ENCODE measurements at regions of chr15 and their contacts with region 1.

Region 1: GRCh38 chr15:34795267-34796081 is at the start of gene ACTC1:
- DNase-seq: peak; percentile 32 to 87
- H3K4me3 ChIP-seq: peak within 1 kb of the TSS; percentile 42 to 48
- H3K27ac ChIP-seq: peak within 1 kb of the TSS; percentile 73 to 77
- H3K4me1 ChIP-seq: peaks cover 0 to 74% (median 36%) of the 10 kb centered on the region in 4 donors
- H3K27me3 ChIP-seq: no peaks in the 10 kb centered on the region
- CTCF ChIP-seq: no peak

Region 2: GRCh38 chr15:34358367-34358766 is 437.1 kb before region 1 on chr15:
- intact Hi-C with region 1: no loop called
- DNase-seq: no peak
- H3K4me3 ChIP-seq: no peak overlapping the region
- H3K27ac ChIP-seq: no peak overlapping the region
- H3K4me1 ChIP-seq: no peaks in the 10 kb centered on the region
- H3K27me3 ChIP-seq: no peaks in the 10 kb centered on the region
- CTCF ChIP-seq: no peak

Region 3: DNA sequence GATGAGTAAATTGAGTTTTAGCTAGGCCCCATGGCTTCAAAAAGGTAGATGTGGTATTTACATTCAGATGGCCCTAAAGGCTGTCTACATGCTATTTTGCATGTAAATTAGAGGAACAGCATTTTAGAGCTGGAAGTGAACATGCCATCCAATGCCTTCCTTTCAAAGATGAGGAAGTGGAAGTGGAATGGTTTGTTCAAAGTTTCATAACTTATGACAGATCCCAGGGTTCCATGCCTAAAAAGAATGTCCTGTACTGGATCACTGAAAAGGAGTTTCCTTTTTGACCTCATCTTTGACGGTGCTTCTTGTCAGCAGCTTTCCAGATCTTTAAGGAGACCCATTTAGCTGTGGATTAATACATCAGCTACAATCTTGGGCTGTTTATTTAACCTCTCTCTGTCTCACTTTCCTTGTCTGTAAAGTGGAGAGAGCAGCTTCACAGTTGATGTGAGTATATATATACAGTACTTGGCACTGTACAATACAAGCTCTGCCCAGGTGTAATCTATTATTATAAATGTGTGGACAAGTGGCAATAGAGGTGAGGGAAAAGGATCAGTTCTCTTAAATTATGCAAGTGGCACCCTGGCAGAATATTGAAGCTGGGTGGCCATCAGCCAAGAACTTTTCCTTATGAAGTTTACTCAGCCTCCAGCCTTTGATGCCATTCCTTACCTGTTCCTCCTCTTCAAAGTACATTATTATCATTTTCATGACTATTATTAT is 143.3 kb before region 1 on chr15:
- intact Hi-C with region 1: no loop called
- DNase-seq: no peak
- H3K4me3 ChIP-seq: no peak overlapping the region
- H3K27ac ChIP-seq: no peak overlapping the region
- H3K4me1 ChIP-seq: no peaks in the 10 kb centered on the region
- H3K27me3 ChIP-seq: no peaks in the 10 kb centered on the region
- CTCF ChIP-seq: no peak

Region 4: DNA sequence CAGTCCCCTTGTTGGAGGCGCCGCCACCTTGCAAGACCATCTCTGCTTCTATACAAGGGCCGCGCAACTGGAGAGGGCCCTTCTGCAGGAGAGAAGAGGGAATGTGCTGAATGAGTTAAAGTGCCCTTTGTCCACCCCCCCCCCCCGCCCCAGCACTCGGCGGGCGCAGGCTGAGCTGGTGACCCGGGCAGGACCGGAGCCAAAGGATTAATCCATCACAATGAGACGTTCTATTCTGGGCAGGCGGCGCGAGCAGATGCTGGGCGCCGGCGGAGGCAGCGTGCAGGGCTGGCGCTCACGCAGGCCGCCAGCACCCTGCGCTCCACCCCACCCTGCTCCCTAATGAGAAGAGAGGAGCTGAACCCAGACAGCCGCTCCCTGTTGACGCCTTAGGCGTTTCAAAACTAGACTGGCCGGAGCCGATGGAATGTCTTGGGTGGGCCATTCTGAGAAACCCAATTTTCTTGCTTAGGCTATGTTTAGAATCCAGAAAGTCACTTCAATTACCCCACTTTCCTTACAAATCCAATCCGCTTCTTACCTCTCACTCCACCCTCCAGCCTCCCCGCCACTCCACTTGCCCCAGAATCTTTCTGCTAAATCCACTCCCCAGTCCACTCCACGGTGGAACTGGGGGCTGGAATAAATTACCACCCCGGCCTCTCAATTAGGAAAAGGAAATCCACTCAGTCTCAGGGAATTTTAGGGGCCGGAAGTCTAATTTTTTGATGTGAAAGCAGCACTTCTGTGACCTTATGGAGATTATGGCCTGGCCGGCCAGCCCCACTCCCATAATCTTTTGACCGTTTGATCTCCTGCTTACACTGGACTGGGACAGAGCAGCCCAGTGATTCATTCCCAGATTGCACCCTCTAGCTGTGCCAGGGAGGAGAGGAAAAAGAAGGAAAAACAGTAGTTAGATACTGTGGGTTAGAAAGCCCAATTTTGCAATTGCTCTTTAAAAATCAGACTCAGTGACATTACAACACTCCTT is 73.4 kb before region 1 on chr15:
- intact Hi-C with region 1: loop called (anchors 2 kb)
- DNase-seq: peak; percentile 67 to 87
- H3K4me3 ChIP-seq: peak overlapping the region; percentile 34 to 44
- H3K27ac ChIP-seq: peak overlapping the region; percentile 62 to 85
- H3K4me1 ChIP-seq: peaks cover 6 to 71% (median 7%) of the 10 kb centered on the region in 4 donors
- H3K27me3 ChIP-seq: no peaks in the 10 kb centered on the region
- CTCF ChIP-seq: peak in 1 of 2 experiments; percentile 5

Region 5: GRCh38 chr15:34753236-34753894 is 42.1 kb before region 1 on chr15:
- intact Hi-C with region 1: loop called (anchors 2 kb)
- DNase-seq: no peak
- H3K4me3 ChIP-seq: no peak overlapping the region
- H3K27ac ChIP-seq: no peak overlapping the region
- H3K4me1 ChIP-seq: peaks cover 0 to 16% (median 8%) of the 10 kb centered on the region in 4 donors
- H3K27me3 ChIP-seq: peaks cover 0 to 51% of the 10 kb centered on the region in 2 donors
- CTCF ChIP-seq: no peak

Region 6: DNA sequence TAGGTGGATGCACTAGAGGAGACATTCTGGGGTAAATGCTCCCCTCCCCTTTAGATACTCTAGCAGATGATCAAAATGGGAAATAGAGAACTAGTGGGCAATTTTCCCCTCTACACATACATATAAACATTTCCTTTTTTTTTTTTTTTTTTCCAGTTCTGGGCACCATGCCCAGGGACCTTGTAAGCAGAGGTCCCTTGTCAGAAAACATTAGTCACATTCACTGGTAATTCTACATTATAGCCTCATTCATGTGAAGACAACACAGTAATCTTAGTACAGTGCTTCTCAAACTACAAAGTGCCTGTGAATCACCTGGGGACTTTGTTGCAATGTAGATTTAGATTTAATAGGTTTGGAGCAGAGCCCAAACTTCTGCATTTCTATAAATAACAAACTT is 59.9 kb after region 1 on chr15:
- intact Hi-C with region 1: loop called (anchors 10 kb)
- DNase-seq: no peak
- H3K4me3 ChIP-seq: no peak overlapping the region
- H3K27ac ChIP-seq: peak overlapping the region in 1 of 2 donors; percentile 52
- H3K4me1 ChIP-seq: peaks cover 0 to 43% (median 26%) of the 10 kb centered on the region in 4 donors
- H3K27me3 ChIP-seq: no peaks in the 10 kb centered on the region
- CTCF ChIP-seq: no peak

Region 7: GRCh38 chr15:35104526-35105147 is 309.2 kb after region 1 on chr15:
- intact Hi-C with region 1: no loop called
- DNase-seq: no peak
- H3K4me3 ChIP-seq: no peak overlapping the region
- H3K27ac ChIP-seq: no peak overlapping the region
- H3K4me1 ChIP-seq: no peaks in the 10 kb centered on the region
- H3K27me3 ChIP-seq: no peaks in the 10 kb centered on the region
- CTCF ChIP-seq: no peak

Measured in tibial artery (tissue), 4 donors.